GM12878 (cell line): ENCODE measurements at regions of chr10 and their contacts with region 1.

Region 1: DNA sequence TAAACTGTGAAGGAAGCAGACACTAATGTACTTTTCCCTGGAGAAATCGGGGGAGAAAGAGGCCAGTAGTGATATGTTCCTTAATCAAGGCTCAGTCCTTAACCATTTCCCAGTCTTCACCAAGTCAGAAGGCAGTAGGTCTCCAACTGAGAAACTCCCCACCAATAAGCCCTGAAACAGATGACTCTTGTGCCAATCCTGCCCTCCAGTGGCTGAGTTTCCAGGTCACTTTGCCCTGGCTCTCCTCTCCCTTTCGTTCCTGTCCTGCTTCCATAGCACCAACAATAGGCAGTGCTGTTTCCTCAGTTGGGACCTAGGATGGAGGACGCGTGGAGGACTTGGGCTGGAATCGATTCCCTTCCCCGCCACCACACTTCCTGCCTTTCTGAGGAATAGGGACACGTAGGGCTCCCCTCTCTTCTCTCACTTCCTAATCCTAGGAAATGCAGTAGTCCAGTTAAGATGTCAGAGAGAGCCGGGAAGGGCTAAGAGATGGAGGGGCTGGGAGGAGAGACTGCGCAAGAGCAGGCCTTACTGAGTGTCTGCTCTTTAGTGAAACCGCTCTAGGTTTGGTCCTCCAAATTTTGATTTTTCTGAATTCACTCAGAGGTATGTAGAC is 23.4 kb downstream of the ATOH7 start:
- DNase-seq: peak; percentile 20
- ATAC-seq: peak; percentile 89
- H3K4me3 ChIP-seq: no peak overlapping the region
- H3K27ac ChIP-seq: no peak overlapping the region
- H3K4me1 ChIP-seq: no peaks in the 10 kb centered on the region; the same call in 1 of the 2 replicates
- H3K27me3 ChIP-seq: no peaks in the 10 kb centered on the region
- CTCF ChIP-seq: peak; percentile 56 to 73 (median 58)
- EP300 ChIP-seq: no peak
- POLR2A ChIP-seq: no peak
- RAD21 ChIP-seq: peak; percentile 63

Region 2: GRCh38 chr10:67575532-67575931 is 633.0 kb before region 1 on chr10:
- CTCF ChIA-PET with region 1: no interaction called
- POLR2A ChIA-PET with region 1: no interaction called
- RAD21 ChIA-PET with region 1: no interaction called
- SMC1A ChIA-PET with region 1: no interaction called
- in situ Hi-C with region 1: no loop called
- intact Hi-C with region 1: no loop called
- DNase-seq: no peak
- ATAC-seq: no peak
- H3K4me3 ChIP-seq: no peak overlapping the region
- H3K27ac ChIP-seq: no peak overlapping the region
- H3K4me1 ChIP-seq: no peaks in the 10 kb centered on the region
- H3K27me3 ChIP-seq: no peaks in the 10 kb centered on the region
- CTCF ChIP-seq: no peak
- EP300 ChIP-seq: no peak
- POLR2A ChIP-seq: no peak
- RAD21 ChIP-seq: no peak

Region 3: GRCh38 chr10:67849331-67850011 is 359.1 kb before region 1 on chr10:
- CTCF ChIA-PET with region 1: interaction called, 57 read pairs
- POLR2A ChIA-PET with region 1: no interaction called
- RAD21 ChIA-PET with region 1: interaction called, 15 read pairs
- SMC1A ChIA-PET with region 1: interaction called, 30 read pairs
- in situ Hi-C with region 1: no loop called
- intact Hi-C with region 1: no loop called
- DNase-seq: peak; percentile 84
- ATAC-seq: peak; percentile 98
- H3K4me3 ChIP-seq: peak overlapping the region; percentile 82
- H3K27ac ChIP-seq: peak overlapping the region; percentile 98
- H3K4me1 ChIP-seq: no peaks in the 10 kb centered on the region
- H3K27me3 ChIP-seq: no peaks in the 10 kb centered on the region
- CTCF ChIP-seq: no peak
- EP300 ChIP-seq: no peak
- POLR2A ChIP-seq: peak; percentile 71
- RAD21 ChIP-seq: no peak

Region 4: GRCh38 chr10:68196701-68197100 is 11.8 kb before region 1 on chr10:
- CTCF ChIA-PET with region 1: interaction called, 11 read pairs
- POLR2A ChIA-PET with region 1: no interaction called
- RAD21 ChIA-PET with region 1: no interaction called
- SMC1A ChIA-PET with region 1: interaction called, 4 read pairs
- in situ Hi-C with region 1: no loop called
- intact Hi-C with region 1: no loop called
- DNase-seq: no peak
- ATAC-seq: no peak
- H3K4me3 ChIP-seq: no peak overlapping the region
- H3K27ac ChIP-seq: no peak overlapping the region
- H3K4me1 ChIP-seq: no peaks in the 10 kb centered on the region
- H3K27me3 ChIP-seq: no peaks in the 10 kb centered on the region; a peak in 1 of 4 replicates
- CTCF ChIP-seq: no peak
- EP300 ChIP-seq: no peak
- POLR2A ChIP-seq: no peak
- RAD21 ChIP-seq: no peak

Region 5: DNA sequence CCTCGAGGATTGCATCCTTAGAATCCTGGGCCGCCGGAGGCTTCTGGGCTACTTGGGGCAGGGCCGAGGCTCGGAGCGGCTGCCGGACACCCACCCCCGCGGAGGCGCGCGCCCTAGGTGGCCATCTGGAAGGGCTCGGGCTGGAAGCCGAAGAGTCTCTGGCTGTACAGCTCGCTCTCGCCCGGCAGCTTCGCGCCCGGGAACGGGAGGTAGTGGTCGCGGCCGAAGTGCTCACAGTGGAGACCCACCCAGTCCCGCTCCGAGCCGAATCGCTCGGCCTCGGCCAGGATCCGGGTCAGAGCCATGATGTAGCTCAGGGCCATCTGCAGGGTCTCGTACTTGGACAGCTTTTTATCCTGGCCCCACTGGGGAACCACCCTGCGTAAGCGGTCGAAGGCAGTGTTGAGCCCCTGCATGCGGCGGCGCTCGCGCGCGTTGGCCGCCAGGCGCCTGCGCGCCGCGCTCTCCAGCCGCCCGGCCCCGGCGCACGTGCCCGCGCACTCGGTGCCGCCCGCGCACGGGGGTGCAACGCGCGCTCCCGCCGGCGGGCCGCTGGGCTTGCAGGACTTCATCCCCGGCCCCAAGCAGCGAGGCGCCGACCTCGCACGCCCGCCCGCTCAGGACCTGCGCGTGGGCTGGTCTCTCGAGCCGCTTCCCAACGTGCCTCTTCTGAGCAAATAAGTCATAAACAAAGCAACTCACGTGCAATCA is 22.7 kb after region 1 on chr10:
- CTCF ChIA-PET with region 1: interaction called, 13 read pairs
- POLR2A ChIA-PET with region 1: no interaction called
- RAD21 ChIA-PET with region 1: interaction called, 6 read pairs
- SMC1A ChIA-PET with region 1: interaction called, 6 read pairs
- in situ Hi-C with region 1: no loop called
- intact Hi-C with region 1: no loop called
- DNase-seq: no peak
- ATAC-seq: peak; percentile 98
- H3K4me3 ChIP-seq: peak overlapping the region; percentile 61; the same call in 1 of the 2 replicates
- H3K27ac ChIP-seq: no peak overlapping the region
- H3K4me1 ChIP-seq: peaks cover 5% of the 10 kb centered on the region; the same call in 1 of the 2 replicates
- H3K27me3 ChIP-seq: peaks cover 0 to 4% of the 10 kb centered on the region in 2 experiments; a peak in 2 of 4 replicates
- CTCF ChIP-seq: peak; percentile 12 to 37 (median 21); a peak in 3 of 6 replicates
- EP300 ChIP-seq: no peak
- POLR2A ChIP-seq: no peak
- RAD21 ChIP-seq: no peak

Region 6: GRCh38 chr10:68315582-68315981 is 107.0 kb after region 1 on chr10:
- CTCF ChIA-PET with region 1: interaction called, 5 read pairs
- POLR2A ChIA-PET with region 1: no interaction called
- RAD21 ChIA-PET with region 1: interaction called, 6 read pairs
- SMC1A ChIA-PET with region 1: interaction called, 18 read pairs
- in situ Hi-C with region 1: no loop called
- intact Hi-C with region 1: no loop called
- DNase-seq: no peak
- ATAC-seq: no peak
- H3K4me3 ChIP-seq: no peak overlapping the region
- H3K27ac ChIP-seq: no peak overlapping the region; the same call in 1 of the 2 replicates
- H3K4me1 ChIP-seq: no peaks in the 10 kb centered on the region
- H3K27me3 ChIP-seq: no peaks in the 10 kb centered on the region
- CTCF ChIP-seq: no peak
- EP300 ChIP-seq: no peak
- POLR2A ChIP-seq: no peak
- RAD21 ChIP-seq: no peak

Region 7: DNA sequence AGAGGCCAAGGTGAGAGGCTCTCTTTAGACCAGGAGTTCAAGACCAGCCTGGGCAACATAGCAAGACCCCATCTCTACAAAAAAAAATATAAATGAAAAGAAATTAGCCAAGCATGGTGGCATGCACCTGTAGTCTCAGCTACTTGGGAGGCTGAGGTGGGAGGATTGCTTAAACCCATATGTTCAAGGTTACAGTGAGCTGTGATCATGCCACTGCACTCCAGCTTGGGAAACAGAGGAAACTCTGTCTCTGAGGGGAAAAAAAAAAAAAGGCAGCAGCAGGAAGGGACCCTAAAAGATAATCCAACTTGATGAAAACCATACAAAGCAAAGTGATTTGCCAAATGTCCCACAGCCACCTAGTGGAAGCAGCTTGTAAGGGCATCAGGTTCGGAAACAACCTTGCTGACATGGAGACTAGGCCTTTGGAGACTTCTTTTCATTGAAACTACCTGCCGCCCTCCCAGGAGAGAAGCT is 139.8 kb after region 1 on chr10:
- CTCF ChIA-PET with region 1: interaction called, 24 read pairs
- POLR2A ChIA-PET with region 1: interaction called, 3 read pairs
- RAD21 ChIA-PET with region 1: interaction called, 8 read pairs
- SMC1A ChIA-PET with region 1: interaction called, 24 read pairs
- in situ Hi-C with region 1: no loop called
- intact Hi-C with region 1: loop called (anchors 2 kb)
- DNase-seq: no peak
- ATAC-seq: peak; percentile 82
- H3K4me3 ChIP-seq: no peak overlapping the region
- H3K27ac ChIP-seq: no peak overlapping the region
- H3K4me1 ChIP-seq: no peaks in the 10 kb centered on the region
- H3K27me3 ChIP-seq: no peaks in the 10 kb centered on the region
- CTCF ChIP-seq: peak; percentile 63 to 83 (median 81)
- EP300 ChIP-seq: no peak
- POLR2A ChIP-seq: no peak
- RAD21 ChIP-seq: peak; percentile 54